Cardiac septum (tissue), 1 donor: ENCODE measurements at regions of chr19 and their contacts with region 1.

Region 1: DNA sequence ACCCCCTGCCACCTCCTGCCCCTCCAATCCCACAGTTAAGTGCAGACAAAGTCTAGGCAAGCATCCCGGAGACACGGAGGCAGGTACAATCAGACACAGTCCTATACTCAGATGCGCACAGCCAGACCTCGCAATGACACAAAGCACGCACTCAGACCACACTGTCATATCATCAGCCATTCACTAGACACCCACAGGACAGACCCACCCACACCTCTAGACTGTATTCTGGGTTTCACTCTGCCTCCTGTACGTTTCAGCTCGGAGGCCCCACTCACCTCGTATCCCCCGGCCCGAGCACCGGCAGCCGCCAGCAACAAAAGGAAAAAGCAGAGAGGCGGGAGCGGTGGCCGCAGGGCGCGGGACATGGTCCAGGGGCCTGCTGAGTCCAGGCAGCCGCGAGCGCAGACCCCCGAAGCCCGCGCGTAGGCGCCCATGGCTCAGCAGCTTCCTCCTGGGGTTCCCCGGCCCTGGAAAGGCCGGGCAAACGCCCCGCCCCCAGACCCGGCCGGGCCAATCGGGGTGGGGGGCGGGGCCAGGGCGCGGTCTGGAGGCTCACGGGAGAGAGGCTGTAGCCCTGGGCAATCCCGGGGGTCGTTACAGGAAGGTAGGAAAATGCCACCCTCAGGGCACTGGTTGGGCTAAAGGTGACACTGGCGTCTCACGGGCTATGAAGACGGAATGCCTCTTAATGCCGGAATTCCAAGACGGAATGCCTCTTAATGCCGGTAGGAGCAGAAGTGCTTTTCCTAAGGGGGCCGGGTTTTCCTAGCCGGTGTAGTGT is at the starts of genes MAN2B1 and WDR83:
- DNase-seq: peak; percentile 90
- total RNA-seq, gene MAN2B1: 20.6 TPM
- total RNA-seq, gene WDR83: 10.0 TPM

Region 2: GRCh38 chr19:12440541-12441316 is 225.7 kb before region 1 on chr19 and contains the start of gene ZNF443:
- intact Hi-C with region 1: no loop called
- DNase-seq: peak; percentile 99
- total RNA-seq, gene ZNF443: 2.0 TPM

Region 3: DNA sequence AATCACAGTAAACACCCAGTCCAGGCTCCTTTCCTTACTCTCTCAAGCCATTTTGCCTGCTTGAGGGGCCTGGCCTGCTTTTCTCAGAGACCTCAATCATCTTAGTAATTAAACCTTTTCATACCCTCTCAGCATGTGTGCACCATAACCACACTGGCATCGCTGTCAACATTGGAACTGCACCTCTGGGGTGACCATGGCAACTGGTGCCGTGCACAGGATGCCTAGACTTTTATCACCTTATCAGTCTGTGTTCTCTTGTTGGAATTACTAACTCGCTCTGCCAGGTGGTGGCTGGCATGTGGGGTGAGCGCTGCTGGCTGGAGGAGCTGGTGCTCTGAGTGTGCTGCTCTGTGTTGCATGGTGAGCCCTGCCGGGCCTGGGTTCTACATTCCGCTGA is 164.3 kb before region 1 on chr19:
- intact Hi-C with region 1: no loop called
- DNase-seq: no peak

Region 4: GRCh38 chr19:12564016-12564664 is 102.3 kb before region 1 on chr19:
- intact Hi-C with region 1: loop called (anchors 5 kb)
- DNase-seq: peak; percentile 94

Region 5: GRCh38 chr19:12681074-12681951 is 14.9 kb after region 1 on chr19 and contains the start of gene DHPS:
- intact Hi-C with region 1: loop called (anchors 1 kb)
- DNase-seq: peak; percentile 95
- total RNA-seq, gene DHPS: 49.0 TPM

Region 6: DNA sequence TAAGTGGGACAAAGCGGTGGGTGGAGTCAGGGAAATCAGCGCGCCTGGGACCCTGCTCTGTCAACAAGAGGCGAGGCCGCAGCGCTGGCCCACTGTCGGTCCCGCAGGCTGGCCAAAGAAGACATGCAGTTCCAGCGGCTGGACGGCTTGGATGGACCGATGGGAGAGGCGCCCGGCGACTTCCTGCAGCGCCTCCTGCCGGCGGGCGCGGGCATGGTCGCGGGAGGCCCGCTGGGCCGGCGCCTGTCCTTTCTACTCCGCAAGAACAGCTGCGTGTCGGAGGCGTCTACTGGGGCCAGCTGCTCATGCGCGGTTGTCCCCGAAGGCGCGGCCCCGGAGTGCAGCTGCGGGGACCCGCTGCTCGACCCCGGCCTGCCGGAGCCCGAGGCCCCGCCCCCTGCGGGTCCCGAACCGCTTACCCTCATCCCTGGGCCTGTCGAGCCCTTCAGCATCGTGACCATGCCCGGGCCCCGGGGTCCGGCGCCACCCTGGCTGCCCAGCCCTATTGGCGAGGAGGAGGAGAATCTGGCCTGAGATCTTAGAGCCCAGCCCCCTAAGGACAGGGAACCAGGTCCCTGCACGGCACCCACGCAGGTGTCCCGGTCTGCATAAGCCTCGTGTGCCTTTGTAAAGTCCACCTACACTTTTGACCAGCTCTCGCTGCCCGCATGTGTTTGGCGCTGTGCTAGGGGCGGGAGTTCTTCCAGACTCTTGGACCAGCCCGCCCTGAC is 91.3 kb after region 1 on chr19:
- intact Hi-C with region 1: no loop called
- DNase-seq: peak; percentile 83

Region 7: GRCh38 chr19:12847159-12848139 is 181.0 kb after region 1 on chr19:
- intact Hi-C with region 1: loop called (anchors 10 kb)
- DNase-seq: peak; percentile 93